Activated T-helper 2 cell treated with anti-CD3 and anti-CD28 coated beads, Interferon-gamma antibody, Interleukin-2, Interleukin-4, amounts not matched to agents 10 μg/mL and 5 μg/mL and 100 μg/mL, durations not matched to agents 14 hours and 24 hours and 36 hours (primary cell): ENCODE measurements at regions of chr1 and their contacts with region 1.

Region 1: DNA sequence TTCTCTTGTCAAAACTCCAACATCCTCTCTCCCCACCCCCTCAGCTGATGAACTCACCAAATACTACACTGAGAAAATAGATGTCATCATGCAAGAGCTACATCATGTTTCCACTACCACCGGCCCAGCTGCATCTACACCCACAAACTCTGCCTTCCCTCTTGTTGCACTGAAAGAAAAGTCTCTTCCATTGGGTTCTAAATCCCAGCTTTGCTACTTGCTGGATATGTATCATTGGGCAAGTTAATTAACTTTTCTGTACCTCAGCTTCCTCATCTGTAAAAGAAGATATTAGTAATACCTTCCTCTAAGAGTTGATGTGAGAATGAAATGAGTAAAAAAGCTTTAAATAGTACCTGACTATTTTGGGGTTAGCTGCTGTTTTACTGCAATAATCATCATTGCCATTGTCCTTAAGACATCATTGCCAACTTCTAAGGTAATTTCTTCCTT is 108.6 kb downstream of the OLFML2B start:
- DNase-seq: no peak
- H3K4me3 Mint-ChIP-seq: no peak overlapping the region
- H3K27ac Mint-ChIP-seq: no peak overlapping the region
- H3K4me1 Mint-ChIP-seq: peaks cover 17% of the 10 kb centered on the region
- H3K27me3 Mint-ChIP-seq: no peaks in the 10 kb centered on the region

Region 2: GRCh38 chr1:161933592-161934588 is 18.8 kb after region 1 on chr1:
- intact Hi-C with region 1: loop called (anchors 2 kb)
- DNase-seq: no peak
- H3K4me3 Mint-ChIP-seq: peak overlapping the region; percentile 4
- H3K27ac Mint-ChIP-seq: peak overlapping the region; percentile 58
- H3K4me1 Mint-ChIP-seq: peaks cover 25% of the 10 kb centered on the region
- H3K27me3 Mint-ChIP-seq: no peaks in the 10 kb centered on the region

Region 3: GRCh38 chr1:162035241-162035640 is 120.2 kb after region 1 on chr1:
- intact Hi-C with region 1: no loop called
- DNase-seq: no peak
- H3K4me3 Mint-ChIP-seq: no peak overlapping the region
- H3K27ac Mint-ChIP-seq: no peak overlapping the region
- H3K4me1 Mint-ChIP-seq: peaks cover 5% of the 10 kb centered on the region
- H3K27me3 Mint-ChIP-seq: peaks cover 18% of the 10 kb centered on the region

Region 4: GRCh38 chr1:162256287-162256686 is 341.2 kb after region 1 on chr1:
- intact Hi-C with region 1: no loop called
- DNase-seq: no peak
- H3K4me3 Mint-ChIP-seq: no peak overlapping the region
- H3K27ac Mint-ChIP-seq: no peak overlapping the region
- H3K4me1 Mint-ChIP-seq: no peaks in the 10 kb centered on the region
- H3K27me3 Mint-ChIP-seq: peaks cover 10% of the 10 kb centered on the region